GM23248 (cell line): ENCODE measurements at regions of chr10 and their contacts with region 1.

Region 1: DNA sequence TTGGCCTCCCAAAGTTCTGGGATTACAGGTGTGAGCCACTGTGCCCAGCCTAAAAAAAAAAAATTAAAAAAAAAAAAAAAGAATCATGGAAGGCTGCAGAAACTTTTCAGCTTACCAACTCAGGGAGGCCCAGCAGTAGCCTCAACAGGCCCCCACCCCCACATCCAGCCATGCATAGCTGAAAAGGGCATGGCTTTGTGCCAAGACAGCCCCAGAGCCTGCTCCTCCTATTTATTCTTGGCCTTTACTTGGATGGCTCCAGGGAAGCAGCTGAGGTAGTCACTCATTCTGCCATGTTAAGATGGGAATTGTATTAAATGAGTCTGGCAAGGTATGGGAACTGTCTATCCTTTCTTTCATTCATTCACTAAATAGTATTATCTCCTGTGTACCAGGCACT is 13.7 kb upstream of the CNNM2 start:
- DNase-seq: no peak
- H3K4me3 ChIP-seq: no peak overlapping the region
- H3K27ac ChIP-seq: no peak overlapping the region
- H3K4me1 ChIP-seq: no peaks in the 10 kb centered on the region
- H3K27me3 ChIP-seq: no peaks in the 10 kb centered on the region

Region 2: DNA sequence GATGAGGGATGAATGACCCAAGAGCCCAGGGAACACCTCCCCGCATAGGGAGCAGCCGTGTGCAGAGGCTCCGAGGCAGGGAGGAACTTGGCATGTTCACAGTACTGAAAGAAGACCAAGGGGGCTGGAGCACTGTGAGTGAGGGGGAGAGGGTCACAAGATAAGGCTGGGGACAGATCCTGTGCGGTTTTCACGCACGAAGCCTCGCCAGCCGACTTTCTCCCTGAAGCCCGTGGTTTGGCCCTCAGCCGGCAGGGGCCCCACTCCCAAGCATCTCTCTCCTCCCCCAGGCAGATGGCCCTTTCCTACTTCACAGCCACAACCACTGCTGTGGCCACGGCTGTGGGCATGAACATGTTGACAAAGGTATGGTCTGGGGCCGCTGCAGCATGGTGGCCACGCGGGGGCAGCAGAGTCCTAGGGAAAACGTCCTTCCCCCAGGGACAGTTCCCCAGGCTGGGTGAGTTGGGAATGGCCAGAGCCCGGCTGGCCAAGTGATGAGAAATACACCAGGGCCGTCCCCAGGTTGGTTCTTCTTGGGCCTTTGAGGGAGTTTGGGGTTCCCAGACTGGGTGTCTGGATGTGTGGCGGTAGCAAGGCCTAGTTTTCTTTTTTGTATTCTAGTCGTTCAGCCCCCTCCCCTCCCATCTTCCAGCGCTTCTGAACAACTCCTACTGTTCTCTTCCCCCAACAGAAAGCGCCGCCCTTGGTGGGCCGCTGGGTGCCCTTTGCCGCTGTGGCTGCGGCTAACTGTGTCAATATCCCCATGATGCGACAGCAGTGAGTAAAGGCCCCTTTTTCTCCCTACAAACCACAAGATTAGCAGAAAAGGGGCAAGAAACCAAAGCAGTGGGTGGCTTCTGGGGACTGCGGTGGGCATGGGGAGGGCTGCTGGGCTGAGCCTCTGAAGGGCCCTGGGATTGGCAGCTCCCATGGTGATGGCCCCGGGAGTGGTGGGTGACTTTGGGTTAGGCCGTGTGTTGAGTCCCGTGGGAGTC is 175.0 kb before region 1 on chr10:
- in situ Hi-C with region 1: loop called (anchors 5 kb)
- DNase-seq: peak; percentile 90
- H3K4me3 ChIP-seq: no peak overlapping the region
- H3K27ac ChIP-seq: no peak overlapping the region
- H3K4me1 ChIP-seq: 0 out of 2 replicates have a peak, but pooled peaks cover 4% of the 10 kb centered on the region
- H3K27me3 ChIP-seq: no peaks in the 10 kb centered on the region

Region 3: GRCh38 chr10:102831322-102832071 is 72.8 kb before region 1 on chr10:
- in situ Hi-C with region 1: loop called (anchors 5 kb)
- DNase-seq: peak; percentile 67
- H3K4me3 ChIP-seq: no peak overlapping the region
- H3K27ac ChIP-seq: no peak overlapping the region
- H3K4me1 ChIP-seq: no peaks in the 10 kb centered on the region
- H3K27me3 ChIP-seq: no peaks in the 10 kb centered on the region